ENCODE measurements at regions of chr2 and their contacts with region 1.

Region 1: GRCh38 chr2:196453613-196454047 is 185.9 kb upstream of the CCDC150 start:
- DNase-seq: peak; percentile 60
- H3K4me3 Mint-ChIP-seq: no peak overlapping the region
- H3K27ac Mint-ChIP-seq: no peak overlapping the region
- H3K4me1 Mint-ChIP-seq: no peaks in the 10 kb centered on the region
- H3K27me3 Mint-ChIP-seq: no peaks in the 10 kb centered on the region
- CTCF ChIP-seq: peak; percentile 78

Region 2: GRCh38 chr2:195923889-195924288 is 529.7 kb before region 1 on chr2:
- CTCF ChIA-PET with region 1: no interaction called
- POLR2A ChIA-PET with region 1: no interaction called
- intact Hi-C with region 1: no loop called
- DNase-seq: no peak
- H3K4me3 Mint-ChIP-seq: no peak overlapping the region
- H3K27ac Mint-ChIP-seq: no peak overlapping the region
- H3K4me1 Mint-ChIP-seq: no peaks in the 10 kb centered on the region
- H3K27me3 Mint-ChIP-seq: no peaks in the 10 kb centered on the region
- CTCF ChIP-seq: no peak

Region 3: DNA sequence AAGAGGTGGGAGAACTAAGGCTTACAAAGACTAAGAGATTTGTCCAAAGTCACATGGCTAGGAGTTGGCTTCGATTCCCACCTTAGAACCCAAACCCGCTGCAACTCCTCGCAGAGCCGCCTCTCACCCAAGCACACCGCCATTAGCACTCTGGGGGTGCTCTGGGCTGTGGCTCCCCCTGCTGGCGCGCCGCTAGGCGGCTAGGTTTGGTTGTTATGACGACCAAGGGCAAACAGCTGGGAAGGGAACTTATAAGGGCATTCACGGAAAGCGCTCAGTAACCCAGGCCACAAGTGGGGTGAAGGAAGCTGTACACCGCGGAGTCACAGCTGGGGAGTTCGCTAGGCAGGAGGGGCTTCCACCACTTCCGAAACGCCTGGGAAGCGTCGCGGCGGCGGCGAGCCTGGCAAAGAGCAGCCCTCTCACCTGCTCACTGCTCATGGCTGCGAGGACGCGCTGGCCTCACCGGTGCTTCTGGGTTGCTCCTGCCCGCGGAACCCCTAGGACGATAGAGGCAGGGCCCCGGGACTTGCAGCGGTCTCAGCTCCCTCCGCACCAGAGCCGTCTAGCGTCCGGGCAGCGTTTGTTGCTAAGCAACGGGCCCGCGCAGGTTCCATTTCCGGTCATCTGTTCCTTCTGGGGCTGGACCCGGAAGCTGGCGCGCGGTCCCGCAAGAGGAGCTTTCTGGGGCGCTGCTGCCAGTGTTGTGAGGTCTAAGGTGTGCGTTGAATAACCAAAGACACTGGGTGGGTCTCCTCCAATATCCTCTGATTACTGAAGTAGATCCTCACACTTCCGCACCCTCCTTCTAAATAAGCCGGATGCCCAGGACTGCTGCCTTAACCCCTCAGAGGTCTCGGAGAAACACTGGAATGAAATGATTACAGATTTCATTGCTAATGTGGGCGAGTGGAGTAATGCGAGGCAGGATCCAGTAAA is 385.1 kb before region 1 on chr2 and contains the start of gene DNAH7:
- CTCF ChIA-PET with region 1: interaction called, 15 read pairs
- POLR2A ChIA-PET with region 1: no interaction called
- intact Hi-C with region 1: no loop called
- DNase-seq: peak; percentile 82
- H3K4me3 Mint-ChIP-seq: peak within 1 kb of the TSS; percentile 93
- H3K27ac Mint-ChIP-seq: peak within 1 kb of the TSS; percentile 99
- H3K4me1 Mint-ChIP-seq: peaks cover 5% of the 10 kb centered on the region
- H3K27me3 Mint-ChIP-seq: no peaks in the 10 kb centered on the region
- CTCF ChIP-seq: peak; percentile 54
- total RNA-seq, gene DNAH7: 0.91 and 0.98 TPM in 2 replicates

Region 4: DNA sequence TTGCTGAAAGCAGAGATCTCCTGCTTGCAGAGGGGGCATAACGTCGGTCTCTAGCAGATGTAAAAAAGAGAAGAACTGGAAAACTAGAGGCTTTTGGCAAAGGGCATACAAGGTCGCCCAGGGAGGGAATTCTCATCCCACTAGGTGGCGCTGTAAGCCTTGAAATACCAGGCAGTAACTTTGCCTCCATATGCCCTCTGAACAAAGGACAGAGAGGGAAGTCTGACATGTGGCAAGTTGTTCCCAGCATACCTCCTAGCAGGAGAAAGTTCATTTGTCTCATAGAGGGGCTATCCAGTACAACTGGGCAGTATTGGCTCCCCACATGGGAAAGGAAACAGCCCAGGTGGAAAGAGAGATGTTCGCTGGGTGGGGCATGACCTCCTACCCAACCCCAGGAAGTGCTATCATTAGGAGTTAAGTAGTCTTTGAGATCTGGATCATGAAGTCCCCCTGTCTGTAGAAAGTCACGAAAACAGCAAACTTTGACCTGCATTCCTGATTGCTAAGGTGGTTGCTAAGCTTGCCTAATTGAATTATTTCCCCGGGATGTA is 322.2 kb before region 1 on chr2:
- CTCF ChIA-PET with region 1: interaction called, 4 read pairs
- POLR2A ChIA-PET with region 1: no interaction called
- intact Hi-C with region 1: loop called (anchors 1 kb)
- DNase-seq: peak; percentile 73
- H3K4me3 Mint-ChIP-seq: no peak overlapping the region
- H3K27ac Mint-ChIP-seq: no peak overlapping the region
- H3K4me1 Mint-ChIP-seq: no peaks in the 10 kb centered on the region
- H3K27me3 Mint-ChIP-seq: no peaks in the 10 kb centered on the region
- CTCF ChIP-seq: peak; percentile 68

Region 5: DNA sequence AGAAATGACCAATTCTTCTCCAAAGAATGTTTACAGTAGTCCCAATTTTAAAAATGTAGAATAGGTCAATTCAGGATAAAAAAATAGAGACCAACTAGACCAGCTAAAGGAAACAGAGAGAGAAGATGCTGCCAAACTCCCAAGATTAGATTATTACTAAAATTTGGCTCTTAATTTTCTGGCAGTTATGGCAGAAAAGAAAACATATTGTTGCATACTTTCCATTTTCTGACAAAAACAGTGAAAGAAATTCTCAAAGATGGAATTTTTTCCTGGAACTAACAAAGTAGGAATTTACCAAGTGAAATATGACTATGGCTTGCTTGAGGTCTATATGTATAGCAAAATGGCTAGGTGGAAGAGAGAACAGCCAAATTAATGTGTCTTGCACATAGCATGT is 143.9 kb before region 1 on chr2:
- CTCF ChIA-PET with region 1: interaction called, 11 read pairs
- POLR2A ChIA-PET with region 1: no interaction called
- intact Hi-C with region 1: no loop called
- DNase-seq: no peak
- H3K4me3 Mint-ChIP-seq: no peak overlapping the region
- H3K27ac Mint-ChIP-seq: no peak overlapping the region
- H3K4me1 Mint-ChIP-seq: no peaks in the 10 kb centered on the region
- H3K27me3 Mint-ChIP-seq: no peaks in the 10 kb centered on the region
- CTCF ChIP-seq: no peak

Region 6: GRCh38 chr2:196431957-196432356 is 21.7 kb before region 1 on chr2:
- CTCF ChIA-PET with region 1: interaction called, 18 read pairs
- POLR2A ChIA-PET with region 1: interaction called, 4 read pairs
- intact Hi-C with region 1: no loop called
- DNase-seq: peak; percentile 27
- H3K4me3 Mint-ChIP-seq: no peak overlapping the region
- H3K27ac Mint-ChIP-seq: no peak overlapping the region
- H3K4me1 Mint-ChIP-seq: peaks cover 6% of the 10 kb centered on the region
- H3K27me3 Mint-ChIP-seq: no peaks in the 10 kb centered on the region
- CTCF ChIP-seq: peak; percentile 33

Region 7: DNA sequence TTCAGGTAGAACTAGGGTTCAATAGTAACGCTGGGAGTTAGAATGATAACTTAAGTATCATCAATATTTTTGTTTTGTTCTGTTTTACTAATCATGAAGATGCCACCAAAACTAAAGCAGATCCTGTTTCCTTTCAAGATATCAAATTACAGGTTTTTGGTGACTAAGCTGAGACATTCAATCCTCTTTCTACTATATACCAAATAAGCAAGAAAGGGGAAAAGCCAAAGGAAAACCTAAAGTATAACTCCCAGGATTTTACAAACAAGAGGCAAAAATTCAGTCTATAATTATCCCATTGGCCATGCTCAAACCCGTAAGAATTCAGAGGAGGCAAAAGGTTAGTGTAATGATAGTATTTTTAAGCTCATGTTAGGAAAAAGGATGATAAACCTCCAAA is 10.7 kb after region 1 on chr2:
- CTCF ChIA-PET with region 1: interaction called, 20 read pairs
- POLR2A ChIA-PET with region 1: no interaction called
- intact Hi-C with region 1: no loop called
- DNase-seq: no peak
- H3K4me3 Mint-ChIP-seq: no peak overlapping the region
- H3K27ac Mint-ChIP-seq: no peak overlapping the region
- H3K4me1 Mint-ChIP-seq: peaks cover 21% of the 10 kb centered on the region
- H3K27me3 Mint-ChIP-seq: no peaks in the 10 kb centered on the region
- CTCF ChIP-seq: no peak

Region 8: GRCh38 chr2:196758474-196759377 is 305.1 kb after region 1 on chr2:
- CTCF ChIA-PET with region 1: interaction called, 11 read pairs
- POLR2A ChIA-PET with region 1: no interaction called
- intact Hi-C with region 1: loop called (anchors 5 kb)
- DNase-seq: peak; percentile 2
- H3K4me3 Mint-ChIP-seq: no peak overlapping the region
- H3K27ac Mint-ChIP-seq: no peak overlapping the region
- H3K4me1 Mint-ChIP-seq: no peaks in the 10 kb centered on the region
- H3K27me3 Mint-ChIP-seq: no peaks in the 10 kb centered on the region
- CTCF ChIP-seq: no peak

Region 9: GRCh38 chr2:196823750-196824522 is 370.3 kb after region 1 on chr2:
- CTCF ChIA-PET with region 1: no interaction called
- POLR2A ChIA-PET with region 1: no interaction called
- intact Hi-C with region 1: no loop called
- DNase-seq: peak; percentile 33
- H3K4me3 Mint-ChIP-seq: no peak overlapping the region
- H3K27ac Mint-ChIP-seq: no peak overlapping the region
- H3K4me1 Mint-ChIP-seq: peaks cover 6% of the 10 kb centered on the region
- H3K27me3 Mint-ChIP-seq: no peaks in the 10 kb centered on the region
- CTCF ChIP-seq: no peak